ENCODE measurements at regions of chr14 and their contacts with region 1.

Region 1: GRCh38 chr14:50860478-50861086 is 11.3 kb upstream of the ABHD12B start:
- DNase-seq: peak; percentile 96
- ATAC-seq: peak; percentile 66
- H3K4me3 ChIP-seq: peak overlapping the region; percentile 82
- H3K27ac ChIP-seq: peak overlapping the region; percentile 34
- H3K4me1 ChIP-seq: peaks cover 13% of the 10 kb centered on the region
- H3K27me3 ChIP-seq: no peaks in the 10 kb centered on the region
- CTCF ChIP-seq: peak; percentile 72; the same call in 1 of the 2 replicates

Region 2: GRCh38 chr14:50599700-50600444 is 260.7 kb before region 1 on chr14:
- CTCF ChIA-PET with region 1: interaction called, 27 read pairs
- POLR2A ChIA-PET with region 1: interaction called, 8 read pairs
- intact Hi-C with region 1: loop called (anchors 1 kb)
- DNase-seq: peak; percentile 86
- ATAC-seq: peak; percentile 66
- H3K4me3 ChIP-seq: peak overlapping the region; percentile 30; the same call in 1 of the 2 replicates
- H3K27ac ChIP-seq: peak overlapping the region; percentile 44
- H3K4me1 ChIP-seq: peaks cover 32% of the 10 kb centered on the region
- H3K27me3 ChIP-seq: no peaks in the 10 kb centered on the region
- CTCF ChIP-seq: peak; percentile 92

Region 3: GRCh38 chr14:50677527-50678063 is 183.0 kb before region 1 on chr14:
- CTCF ChIA-PET with region 1: interaction called, 3 read pairs
- POLR2A ChIA-PET with region 1: no interaction called
- intact Hi-C with region 1: loop called (anchors 5 kb)
- DNase-seq: peak; percentile 88
- ATAC-seq: peak; percentile 91
- H3K4me3 ChIP-seq: peak overlapping the region; percentile 54
- H3K27ac ChIP-seq: peak overlapping the region; percentile 80
- H3K4me1 ChIP-seq: peaks cover 44% of the 10 kb centered on the region
- H3K27me3 ChIP-seq: no peaks in the 10 kb centered on the region
- CTCF ChIP-seq: no peak

Region 4: GRCh38 chr14:50762001-50762930 is 98.3 kb before region 1 on chr14:
- CTCF ChIA-PET with region 1: interaction called, 20 read pairs
- POLR2A ChIA-PET with region 1: no interaction called
- intact Hi-C with region 1: loop called (anchors 1 kb)
- DNase-seq: peak; percentile 86
- ATAC-seq: peak; percentile 36
- H3K4me3 ChIP-seq: peak overlapping the region; percentile 25; the same call in 1 of the 2 replicates
- H3K27ac ChIP-seq: peak overlapping the region; percentile 94
- H3K4me1 ChIP-seq: peaks cover 29% of the 10 kb centered on the region
- H3K27me3 ChIP-seq: no peaks in the 10 kb centered on the region
- CTCF ChIP-seq: no peak

Region 5: GRCh38 chr14:50785457-50786063 is 75.0 kb before region 1 on chr14:
- CTCF ChIA-PET with region 1: interaction called, 8 read pairs
- POLR2A ChIA-PET with region 1: no interaction called
- intact Hi-C with region 1: loop called (anchors 2 kb)
- DNase-seq: no peak
- ATAC-seq: no peak
- H3K4me3 ChIP-seq: no peak overlapping the region
- H3K27ac ChIP-seq: no peak overlapping the region
- H3K4me1 ChIP-seq: peaks cover 15% of the 10 kb centered on the region
- H3K27me3 ChIP-seq: no peaks in the 10 kb centered on the region
- CTCF ChIP-seq: no peak

Region 6: DNA sequence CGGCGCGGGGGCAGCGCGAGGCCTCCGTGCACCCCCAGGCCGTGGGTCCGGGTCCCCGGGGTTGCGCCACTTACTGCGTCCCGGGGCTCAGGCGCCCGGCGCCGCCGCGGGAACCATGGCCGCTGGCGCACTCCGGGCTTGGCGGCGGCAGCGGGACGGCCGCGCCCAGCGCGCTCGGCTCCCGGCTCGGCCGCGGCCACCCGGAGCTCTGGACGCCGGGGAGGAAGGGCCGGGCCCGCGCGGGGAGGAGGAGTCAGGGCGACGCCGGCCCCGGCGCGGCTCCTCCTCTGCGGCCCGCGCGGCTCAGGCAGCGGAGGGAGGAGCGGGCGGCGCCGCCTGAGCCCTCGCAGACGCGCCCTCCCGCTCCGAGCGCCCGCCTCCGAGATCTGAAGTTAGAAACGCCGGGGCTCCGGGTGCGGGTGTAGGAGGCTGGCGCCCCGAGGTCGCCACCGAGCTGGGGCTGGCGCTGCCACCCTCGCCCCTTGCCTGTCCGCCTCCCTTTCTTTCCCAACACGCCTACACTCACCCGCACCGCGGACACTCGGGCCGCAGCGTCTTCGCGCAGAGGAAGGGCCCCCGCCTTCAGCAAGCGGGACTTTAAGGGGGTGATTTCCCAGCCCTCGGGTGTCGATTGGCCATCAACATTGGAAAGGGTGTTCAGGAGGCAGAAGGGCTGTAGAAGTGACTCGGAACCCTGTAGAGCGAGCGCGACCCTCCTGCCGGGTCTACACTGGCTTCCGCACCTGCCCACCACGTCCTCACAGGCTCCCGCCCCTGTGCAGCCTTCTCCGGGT is 29.5 kb before region 1 on chr14 and contains the start of gene NIN:
- CTCF ChIA-PET with region 1: interaction called, 10 read pairs
- POLR2A ChIA-PET with region 1: interaction called, 4 read pairs
- intact Hi-C with region 1: loop called (anchors 1 kb)
- DNase-seq: peak; percentile 92
- ATAC-seq: peak; percentile 93
- H3K4me3 ChIP-seq: peak within 1 kb of the TSS; percentile 86
- H3K27ac ChIP-seq: no peak within 1 kb of the TSS
- H3K4me1 ChIP-seq: peaks cover 23% of the 10 kb centered on the region
- H3K27me3 ChIP-seq: no peaks in the 10 kb centered on the region
- CTCF ChIP-seq: no peak
- total RNA-seq, gene NIN: 34.3 and 40.1 TPM in 2 replicates

Region 7: DNA sequence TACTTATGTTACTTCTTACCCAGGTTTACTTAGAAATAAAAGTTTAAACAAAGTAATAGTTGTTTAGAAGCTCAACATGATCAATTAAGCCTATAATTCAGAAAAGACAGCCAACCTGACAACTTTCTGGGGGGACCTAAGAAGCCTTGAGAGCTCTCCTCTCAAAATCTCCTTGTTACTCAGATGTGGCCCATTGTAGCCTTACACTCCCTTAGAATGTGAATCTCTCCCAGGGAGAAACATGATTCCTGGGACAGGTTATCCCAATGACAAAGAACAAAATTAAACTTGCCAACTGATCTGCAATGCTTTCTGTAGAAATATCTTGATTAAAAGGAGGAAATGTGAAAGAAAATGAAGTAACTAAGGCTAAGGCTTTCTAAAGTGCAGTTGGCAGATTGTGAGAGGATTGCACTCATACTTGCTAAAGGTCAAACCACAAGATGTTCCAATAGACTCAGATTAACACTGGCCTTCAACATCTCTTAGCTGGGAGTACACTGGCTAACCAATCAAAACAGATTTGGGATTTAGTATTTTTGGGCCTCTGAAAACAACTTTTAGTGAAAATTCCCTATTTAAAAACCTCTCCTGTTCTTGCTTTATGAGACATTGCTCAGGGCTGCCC is 307.1 kb after region 1 on chr14:
- CTCF ChIA-PET with region 1: interaction called, 10 read pairs
- POLR2A ChIA-PET with region 1: no interaction called
- intact Hi-C with region 1: no loop called
- DNase-seq: peak; percentile 17
- ATAC-seq: 0 out of 2 replicates have a peak, but pooled peaks have one; percentile 8
- H3K4me3 ChIP-seq: no peak overlapping the region
- H3K27ac ChIP-seq: no peak overlapping the region
- H3K4me1 ChIP-seq: peaks cover 36% of the 10 kb centered on the region
- H3K27me3 ChIP-seq: no peaks in the 10 kb centered on the region
- CTCF ChIP-seq: no peak

Measured in PC-3 (cell line).